GM10248 (cell line): ENCODE measurements at regions of chr22 and their contacts with region 1.

Region 1: DNA sequence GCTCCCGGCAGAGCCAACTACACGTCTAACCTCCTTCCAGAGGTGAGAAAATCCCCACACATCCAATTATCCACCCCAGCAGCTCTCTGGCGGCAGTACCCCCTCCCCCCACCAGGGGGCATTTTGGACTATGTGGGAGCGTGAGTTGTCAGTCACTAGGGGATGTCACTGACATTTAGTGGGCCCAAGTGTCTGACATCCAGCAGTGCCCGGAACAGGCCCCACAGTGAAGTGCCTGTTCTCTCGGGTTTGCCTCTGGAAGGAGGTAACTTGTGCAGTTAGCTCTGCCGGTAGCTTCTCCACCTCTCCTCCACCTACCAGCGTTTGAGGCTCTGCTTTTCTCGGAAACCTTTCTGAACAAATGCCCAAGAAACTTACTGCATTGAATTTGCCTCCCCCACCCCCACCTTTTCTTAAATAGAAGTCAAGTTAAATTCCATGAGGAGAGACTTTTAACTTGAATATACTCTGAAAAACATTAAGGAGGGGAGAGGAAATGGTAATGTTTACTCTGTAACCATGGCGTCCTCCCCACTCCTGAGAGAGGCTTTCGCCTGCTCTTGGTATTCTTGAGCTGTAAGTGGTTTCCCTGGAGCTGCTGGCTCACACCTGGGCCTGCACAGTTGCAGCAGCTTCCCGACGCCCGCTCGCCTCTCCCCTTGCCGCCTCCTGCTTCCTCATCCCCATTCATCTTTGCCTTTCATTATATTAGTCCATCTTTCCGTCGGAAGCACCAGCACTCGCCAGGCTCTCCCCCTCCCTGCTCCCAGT is 112.8 kb downstream of the WNT7B start:
- DNase-seq: peak; percentile 81
- CTCF ChIP-seq: peak; percentile 73

Region 2: DNA sequence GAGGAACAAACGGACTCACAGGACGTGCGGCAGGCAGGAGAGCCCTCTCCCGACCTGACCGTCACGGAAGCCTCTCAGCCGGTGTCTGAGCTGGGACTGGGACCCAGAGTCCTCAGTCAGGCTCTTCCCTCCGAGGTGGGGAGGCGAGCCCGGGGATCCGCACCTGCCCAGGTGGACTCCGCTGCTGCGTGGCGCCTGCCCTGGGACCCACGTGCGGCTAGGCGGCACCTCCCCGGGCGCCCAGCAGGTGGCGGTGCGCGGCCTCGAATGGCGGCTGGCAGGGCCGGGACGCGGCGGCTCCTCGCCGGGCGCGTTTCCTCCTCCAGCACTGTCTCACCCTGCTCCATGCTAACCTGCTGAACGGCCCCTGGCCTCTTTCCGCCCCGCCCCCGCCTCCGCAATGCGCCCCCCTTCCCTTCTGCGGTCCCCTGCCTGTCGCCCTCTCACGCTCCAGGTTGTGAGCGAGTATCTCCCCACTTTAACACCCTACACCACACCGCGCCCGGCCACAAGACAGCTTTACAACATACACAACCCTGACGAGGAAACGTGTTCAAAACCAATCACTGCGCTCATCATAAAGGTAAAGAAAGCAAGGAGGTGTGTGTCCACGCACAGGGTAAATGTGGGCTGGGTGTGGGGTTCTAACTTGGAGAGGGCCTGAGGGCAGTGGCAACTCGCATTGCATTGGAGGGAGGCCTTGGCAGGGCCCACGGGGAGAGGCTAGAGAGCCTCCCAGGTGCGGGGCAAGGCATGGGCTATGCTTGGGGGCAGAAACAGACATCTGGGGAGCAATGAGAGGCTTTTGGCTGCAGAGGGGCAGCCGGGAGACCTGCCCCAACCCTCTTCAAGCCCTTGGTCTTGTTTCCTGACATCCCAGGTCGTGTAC is 218.4 kb before region 1 on chr22:
- CTCF ChIA-PET with region 1: interaction called, 20 read pairs
- POLR2A ChIA-PET with region 1: no interaction called
- DNase-seq: peak; percentile 91
- CTCF ChIP-seq: peak; percentile 97

Region 3: DNA sequence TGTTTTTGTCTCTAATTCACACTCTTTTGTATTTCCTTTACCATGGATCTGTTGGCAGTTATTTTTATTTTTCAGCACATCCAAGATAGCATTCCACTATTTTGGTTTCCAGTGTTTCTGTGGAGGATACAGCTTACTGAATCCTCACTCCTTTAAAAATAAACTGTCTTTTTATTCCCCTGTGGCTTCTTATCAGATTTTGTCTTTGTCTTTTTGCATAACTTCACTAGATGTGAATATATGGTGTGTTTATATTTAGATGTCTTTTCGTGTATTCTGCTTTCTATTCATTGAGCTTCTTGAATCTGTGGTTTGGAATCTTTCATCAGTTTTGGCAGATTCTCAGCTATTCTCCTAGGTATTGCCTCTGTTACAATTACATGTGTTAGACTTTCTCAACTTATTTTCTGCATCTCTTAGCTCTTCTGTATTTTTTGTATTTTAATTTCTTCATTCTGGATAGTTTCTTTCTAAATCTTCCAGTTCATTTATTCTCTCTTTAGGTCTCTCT is 200.0 kb before region 1 on chr22:
- CTCF ChIA-PET with region 1: interaction called, 11 read pairs
- POLR2A ChIA-PET with region 1: no interaction called
- DNase-seq: no peak
- CTCF ChIP-seq: no peak

Region 4: DNA sequence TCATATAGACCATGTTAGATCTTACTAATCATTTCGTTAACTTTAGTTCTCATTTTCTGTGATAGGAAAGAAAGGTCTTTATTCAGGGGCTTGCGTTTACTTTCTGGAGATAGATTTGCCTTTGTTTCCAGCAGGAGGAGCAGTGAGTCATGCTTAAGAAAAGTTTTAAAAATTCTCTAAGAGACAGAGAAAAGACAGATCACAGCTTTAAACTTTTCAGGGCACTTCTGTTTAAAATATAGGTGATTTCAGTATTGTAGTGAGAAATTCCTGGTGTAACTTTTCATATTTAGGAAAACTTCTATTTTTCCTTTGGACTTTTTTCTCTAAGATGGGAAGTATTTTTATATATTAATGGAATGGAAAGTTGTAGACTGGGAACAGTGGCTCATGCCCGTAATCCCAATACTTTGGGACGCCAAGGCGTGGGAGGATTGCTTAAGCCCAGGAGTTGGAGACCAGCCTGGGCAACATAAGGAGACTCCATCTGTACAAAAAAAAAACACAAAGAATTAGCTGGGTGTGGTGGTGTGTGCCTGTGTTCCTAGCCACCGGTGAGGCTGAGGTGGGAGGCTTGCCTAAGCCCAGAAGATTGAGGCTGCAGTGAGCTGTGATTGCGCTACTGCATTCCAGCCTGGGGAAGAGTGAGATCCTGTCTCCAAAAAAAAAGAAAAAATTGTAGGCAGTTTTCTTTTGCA is 132.2 kb before region 1 on chr22:
- CTCF ChIA-PET with region 1: interaction called, 13 read pairs
- POLR2A ChIA-PET with region 1: no interaction called
- DNase-seq: no peak
- CTCF ChIP-seq: peak; percentile 22

Region 5: GRCh38 chr22:45842291-45842991 is 21.7 kb before region 1 on chr22:
- CTCF ChIA-PET with region 1: interaction called, 14 read pairs
- POLR2A ChIA-PET with region 1: no interaction called
- DNase-seq: no peak
- CTCF ChIP-seq: no peak

Region 6: GRCh38 chr22:45852826-45853225 is 11.3 kb before region 1 on chr22:
- CTCF ChIA-PET with region 1: interaction called, 27 read pairs
- POLR2A ChIA-PET with region 1: no interaction called
- DNase-seq: no peak
- CTCF ChIP-seq: no peak

Region 7: GRCh38 chr22:45878051-45878781 is 14.1 kb after region 1 on chr22:
- CTCF ChIA-PET with region 1: interaction called, 47 read pairs
- POLR2A ChIA-PET with region 1: interaction called, 7 read pairs
- DNase-seq: no peak
- CTCF ChIP-seq: no peak

Region 8: DNA sequence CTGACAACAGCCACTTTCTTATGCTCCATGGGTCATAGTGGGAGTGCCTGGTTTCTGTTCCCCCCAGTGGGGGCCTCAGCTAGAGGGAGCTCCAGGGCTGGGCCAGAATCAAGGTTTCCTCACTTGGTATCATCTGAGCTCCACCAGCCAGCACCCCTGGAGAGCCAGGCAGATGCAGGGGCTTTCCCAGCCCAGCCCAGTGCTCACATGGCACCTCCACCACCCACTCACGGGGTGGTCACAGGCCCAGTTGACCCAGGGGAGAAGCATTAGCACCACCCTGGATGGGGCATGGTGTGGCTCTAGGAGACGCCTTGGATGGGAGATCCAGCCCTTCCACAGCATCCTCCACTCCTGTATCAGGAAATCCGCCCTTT is 136.9 kb after region 1 on chr22:
- CTCF ChIA-PET with region 1: no interaction called
- POLR2A ChIA-PET with region 1: no interaction called
- DNase-seq: no peak
- CTCF ChIP-seq: no peak

Region 9: GRCh38 chr22:46023558-46023981 is 159.4 kb after region 1 on chr22:
- CTCF ChIA-PET with region 1: no interaction called
- POLR2A ChIA-PET with region 1: no interaction called
- DNase-seq: no peak
- CTCF ChIP-seq: no peak